ENCODE measurements at regions of chr7 and their contacts with region 1.

Region 1: GRCh38 chr7:93043385-93043985 is 74.3 kb downstream of the SAMD9 start:
- DNase-seq: peak in 3 of 4 donors; percentile 22 to 76 (median 27)
- ATAC-seq: peak; percentile 55
- H3K4me3 ChIP-seq: no peak overlapping the region
- H3K27ac ChIP-seq: no peak overlapping the region
- H3K4me1 ChIP-seq: no peaks in the 10 kb centered on the region
- H3K27me3 ChIP-seq: no peaks in the 10 kb centered on the region
- CTCF ChIP-seq: no peak

Region 2: DNA sequence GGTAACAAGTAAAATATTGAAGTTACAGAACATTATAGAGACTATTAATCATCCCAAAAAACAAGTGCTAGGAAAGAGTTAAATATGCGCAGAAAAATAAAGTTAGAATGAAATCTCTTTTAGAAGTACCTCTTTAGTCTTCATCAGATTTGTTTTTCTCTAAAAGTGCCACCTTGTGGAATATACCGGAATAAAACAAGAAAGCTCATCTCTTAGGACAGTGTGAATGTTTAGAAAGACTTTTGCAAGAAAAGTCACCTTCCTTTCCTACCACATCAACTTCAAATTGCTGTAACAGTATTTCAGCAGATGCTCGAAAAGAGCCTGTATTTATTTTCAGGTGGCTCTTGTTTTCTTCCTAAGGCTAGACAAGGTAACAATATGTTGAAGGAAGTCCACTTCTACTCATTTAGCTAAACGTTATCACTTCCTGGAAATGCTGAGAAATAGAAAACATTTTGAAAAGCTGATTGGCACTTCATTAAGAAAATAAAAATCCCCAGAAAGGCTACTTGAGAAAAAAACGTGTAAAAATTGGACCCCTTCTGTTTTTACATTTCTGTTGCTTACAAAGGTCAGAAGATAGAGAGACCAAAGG is 433.5 kb before region 1 on chr7:
- intact Hi-C with region 1: loop called in 1 of 2 experiments (anchors 10 kb)
- DNase-seq: no peak
- ATAC-seq: peak; percentile 53
- H3K4me3 ChIP-seq: no peak overlapping the region
- H3K27ac ChIP-seq: no peak overlapping the region
- H3K4me1 ChIP-seq: no peaks in the 10 kb centered on the region
- H3K27me3 ChIP-seq: no peaks in the 10 kb centered on the region
- CTCF ChIP-seq: peak; percentile 23 to 24

Region 3: GRCh38 chr7:92731335-92732063 is 312.0 kb before region 1 on chr7:
- intact Hi-C with region 1: no loop called
- DNase-seq: no peak
- ATAC-seq: peak; percentile 56
- H3K4me3 ChIP-seq: no peak overlapping the region
- H3K27ac ChIP-seq: peak overlapping the region in 1 of 2 donors; percentile 59
- H3K4me1 ChIP-seq: peaks cover 0 to 16% of the 10 kb centered on the region in 2 donors
- H3K27me3 ChIP-seq: no peaks in the 10 kb centered on the region
- CTCF ChIP-seq: no peak

Region 4: DNA sequence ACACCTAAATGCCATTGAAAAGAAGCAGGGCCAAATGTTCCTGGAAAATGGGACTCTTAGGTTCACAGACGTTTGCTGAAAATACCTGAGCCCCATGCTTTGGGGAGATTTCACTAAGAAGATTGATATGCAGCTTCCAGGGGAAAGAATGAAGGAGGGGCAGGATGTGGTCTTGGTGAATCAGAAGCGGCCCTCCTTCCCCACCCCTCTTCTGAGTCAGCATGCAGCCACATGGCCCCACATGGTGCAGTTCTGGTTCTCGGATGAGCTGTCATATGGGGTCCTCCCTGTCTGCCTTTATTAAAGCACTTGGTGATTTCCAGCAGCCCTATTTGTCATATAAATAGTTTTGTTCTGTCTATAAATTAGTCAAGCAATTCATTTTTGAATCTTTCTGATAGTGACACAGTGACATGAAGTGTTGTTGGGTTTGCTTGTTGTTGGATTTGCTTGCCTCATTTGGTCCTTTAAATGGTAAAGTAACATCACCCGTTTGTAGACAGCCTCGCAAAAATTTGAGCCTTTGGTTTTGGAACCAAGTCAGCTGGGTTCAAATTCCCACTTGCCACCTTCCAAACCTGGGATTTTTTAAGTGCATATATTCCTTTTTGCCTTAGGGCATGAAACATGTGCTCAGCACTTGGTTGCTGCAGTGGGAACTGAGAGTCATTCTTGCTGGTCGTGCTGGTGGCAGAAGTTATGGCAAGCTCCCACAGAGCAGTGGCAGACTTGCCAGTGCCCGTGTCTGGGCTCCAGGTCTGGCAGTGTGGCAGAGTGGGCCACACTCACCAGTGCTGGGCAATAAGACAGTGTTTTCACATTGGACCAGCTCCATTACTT is 139.0 kb before region 1 on chr7:
- intact Hi-C with region 1: no loop called
- DNase-seq: peak in 1 of 4 donors; percentile 39
- ATAC-seq: peak; percentile 68
- H3K4me3 ChIP-seq: no peak overlapping the region
- H3K27ac ChIP-seq: no peak overlapping the region
- H3K4me1 ChIP-seq: peaks cover 0 to 4% of the 10 kb centered on the region in 2 donors
- H3K27me3 ChIP-seq: no peaks in the 10 kb centered on the region
- CTCF ChIP-seq: no peak

Region 5: GRCh38 chr7:93178212-93178611 is 134.7 kb after region 1 on chr7:
- intact Hi-C with region 1: no loop called
- DNase-seq: peak in 2 of 4 donors; percentile 2 to 10
- ATAC-seq: no peak
- H3K4me3 ChIP-seq: no peak overlapping the region
- H3K27ac ChIP-seq: no peak overlapping the region
- H3K4me1 ChIP-seq: no peaks in the 10 kb centered on the region
- H3K27me3 ChIP-seq: no peaks in the 10 kb centered on the region
- CTCF ChIP-seq: no peak